HEK293 (cell line): ENCODE measurements at regions of chr1 and their contacts with region 1.

Region 1: DNA sequence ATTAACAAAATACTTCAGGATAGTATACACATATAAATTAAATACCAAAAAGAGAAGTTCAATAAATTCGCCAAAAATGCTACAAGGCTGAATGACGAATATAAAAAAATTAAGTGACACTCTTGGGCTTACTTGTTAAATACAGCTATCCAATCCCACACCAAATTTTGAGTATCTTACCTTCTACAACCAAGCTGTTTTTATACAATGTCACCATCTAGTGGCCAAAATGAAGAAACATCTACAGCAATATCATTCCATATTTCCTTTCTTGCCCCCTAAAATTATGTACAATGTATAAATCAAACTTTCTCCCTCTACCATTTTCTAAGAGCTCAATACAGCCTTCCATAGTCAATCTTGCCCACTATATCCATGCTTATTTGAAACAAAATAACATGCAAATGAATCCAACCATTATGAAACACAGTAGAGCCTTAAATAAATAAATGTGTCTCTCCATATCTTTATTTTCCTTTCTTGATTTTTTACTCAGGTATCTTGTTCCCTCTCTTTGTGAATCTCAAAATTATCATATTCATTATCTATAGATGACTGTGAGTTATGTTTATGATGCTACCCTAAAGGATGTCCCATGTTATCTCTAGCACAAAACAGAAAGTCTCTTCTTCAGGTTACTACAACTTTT is 86.3 kb downstream of the ACBD6 start:
- H3K4me3 ChIP-seq: no peak overlapping the region
- H3K27ac ChIP-seq: no peak overlapping the region
- H3K4me1 ChIP-seq: no peaks in the 10 kb centered on the region
- CTCF ChIP-seq: peak; percentile 51; the same call in 1 of the 2 replicates

Region 2: DNA sequence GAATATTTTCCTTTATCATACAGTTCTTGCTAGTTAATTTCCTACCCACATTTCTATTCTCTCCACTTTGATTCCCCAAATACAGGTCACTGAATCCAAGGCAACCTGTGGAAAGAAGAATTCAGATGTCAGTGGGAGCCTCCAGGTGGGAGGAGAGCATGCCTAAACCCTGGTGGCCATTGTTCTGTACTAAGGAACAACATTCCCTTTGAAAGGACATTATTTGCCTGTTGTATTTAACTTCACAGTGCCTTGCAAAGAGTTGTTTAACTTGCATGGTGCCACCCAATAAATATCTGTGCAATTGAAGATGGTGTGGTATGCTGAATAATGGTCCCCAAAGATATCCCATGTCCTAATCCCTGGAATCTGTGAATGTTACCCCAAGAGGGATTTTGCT is 861.7 kb before region 1 on chr1:
- CTCF ChIA-PET with region 1: no interaction called
- POLR2A ChIA-PET with region 1: no interaction called
- H3K4me3 ChIP-seq: no peak overlapping the region
- H3K27ac ChIP-seq: no peak overlapping the region
- H3K4me1 ChIP-seq: no peaks in the 10 kb centered on the region
- CTCF ChIP-seq: no peak

Region 3: DNA sequence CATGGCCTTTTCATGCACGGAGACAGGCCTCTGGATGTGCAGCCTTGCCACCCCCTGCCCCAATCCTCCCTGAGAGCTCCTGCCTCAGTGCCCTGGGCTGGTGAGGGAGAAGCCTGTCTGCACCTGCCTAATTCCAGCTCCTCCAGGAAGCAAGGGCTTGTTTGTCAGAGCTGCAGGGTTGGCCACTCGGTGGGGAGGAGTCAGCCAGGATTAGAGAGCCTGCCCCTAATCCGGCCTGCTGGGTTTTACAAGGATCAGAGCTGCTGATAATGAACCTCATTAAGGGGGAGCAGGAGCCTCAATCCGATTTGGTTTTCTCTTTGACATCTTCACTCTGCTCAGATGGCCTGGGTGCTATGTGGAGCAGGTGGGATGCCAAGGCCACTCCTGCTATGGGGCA is 217.9 kb before region 1 on chr1:
- CTCF ChIA-PET with region 1: interaction called, 12 read pairs
- POLR2A ChIA-PET with region 1: no interaction called
- H3K4me3 ChIP-seq: no peak overlapping the region
- H3K27ac ChIP-seq: no peak overlapping the region
- H3K4me1 ChIP-seq: no peaks in the 10 kb centered on the region
- CTCF ChIP-seq: no peak